Astrocyte of the cerebellum (primary cell): ENCODE measurements at regions of chr10 and their contacts with region 1.

Region 1: GRCh38 chr10:71899665-71900412 is 48.8 kb upstream of the PSAP start:
- DNase-seq: no peak
- H3K4me3 ChIP-seq: no peak overlapping the region
- CTCF ChIP-seq: no peak

Region 2: GRCh38 chr10:71829171-71829570 is 70.7 kb before region 1 on chr10:
- in situ Hi-C with region 1: loop called (anchors 5 kb)
- DNase-seq: no peak
- H3K4me3 ChIP-seq: no peak overlapping the region
- CTCF ChIP-seq: no peak

Region 3: DNA sequence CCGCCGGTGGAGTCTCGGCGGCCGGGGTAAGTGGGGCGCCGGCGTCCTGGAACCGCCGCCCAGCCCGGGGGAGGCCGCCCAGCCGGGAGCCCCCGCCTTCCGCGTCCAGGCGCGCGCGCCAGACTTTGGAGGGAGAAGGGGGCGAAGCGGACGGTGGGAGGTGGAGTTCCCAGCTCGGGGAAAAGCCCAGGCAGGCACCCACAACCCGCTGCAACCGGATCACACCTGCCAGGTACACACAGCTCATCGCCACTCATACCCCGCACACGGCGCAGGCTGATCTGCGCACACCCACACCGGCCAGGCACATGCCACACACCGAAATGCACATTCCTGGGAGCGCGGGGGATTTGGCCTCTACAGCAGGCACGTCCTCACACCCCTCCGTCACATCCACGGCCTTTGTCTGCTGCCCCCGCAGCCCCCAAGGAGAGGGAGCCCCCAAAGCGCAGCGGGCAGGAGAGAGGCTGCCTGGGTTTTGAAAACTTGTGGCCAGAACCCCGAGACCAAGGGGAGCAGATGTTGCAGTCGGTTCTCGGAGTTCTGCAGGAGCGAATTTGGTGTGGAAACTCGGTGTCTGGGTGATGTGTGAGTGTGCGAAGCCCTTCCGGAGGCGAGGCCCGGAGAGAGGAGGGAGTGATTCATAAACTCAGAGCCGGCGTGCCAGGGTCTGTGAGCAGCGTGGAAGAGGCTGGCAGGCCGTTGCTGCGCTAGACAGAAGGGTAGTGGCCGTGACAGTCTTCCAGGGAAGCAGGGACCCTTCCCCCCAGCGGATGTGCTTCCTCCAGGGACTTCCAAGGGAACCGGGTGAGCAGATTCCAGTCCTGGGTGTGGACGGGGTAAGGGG is 65.1 kb after region 1 on chr10:
- in situ Hi-C with region 1: loop called (anchors 5 kb)
- DNase-seq: no peak
- H3K4me3 ChIP-seq: peak overlapping the region; percentile 59
- CTCF ChIP-seq: no peak